Caco-2 (cell line): ENCODE measurements at regions of chr5 and their contacts with region 1.

Region 1: GRCh38 chr5:38672059-38672788 is 115.8 kb upstream of the LIFR start:
- DNase-seq: peak; percentile 73 to 74
- H3K4me3 ChIP-seq: no peak overlapping the region
- H3K4me3 Mint-ChIP-seq: no peak overlapping the region
- H3K27ac Mint-ChIP-seq: peak overlapping the region; percentile 76
- H3K4me1 ChIP-seq: peaks cover 60% of the 10 kb centered on the region
- H3K4me1 Mint-ChIP-seq: peaks cover 36% of the 10 kb centered on the region
- H3K27me3 ChIP-seq: no peaks in the 10 kb centered on the region
- H3K27me3 Mint-ChIP-seq: no peaks in the 10 kb centered on the region
- CTCF ChIP-seq: no peak

Region 2: DNA sequence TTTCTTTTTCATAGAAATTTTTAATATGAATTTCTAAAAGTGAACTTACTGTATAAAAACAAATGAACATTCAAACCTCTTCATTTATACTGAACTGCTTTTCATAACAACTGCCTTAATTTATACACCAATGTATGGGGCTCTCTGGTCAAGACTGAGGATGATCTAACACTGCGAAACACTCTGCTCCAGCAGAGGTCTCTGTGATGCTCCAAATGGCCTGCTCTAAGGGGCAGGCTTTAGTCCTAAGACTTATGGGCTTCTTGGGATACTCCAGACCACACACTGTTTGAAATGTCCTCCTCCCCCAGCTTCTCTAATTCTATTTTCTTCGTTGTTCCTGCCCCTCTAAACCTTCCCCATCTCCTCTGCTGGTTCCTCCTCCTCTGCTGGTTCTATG is 174.3 kb before region 1 on chr5:
- CTCF ChIA-PET with region 1: no interaction called
- POLR2A ChIA-PET with region 1: no interaction called
- intact Hi-C with region 1: loop called (anchors 1 kb)
- DNase-seq: peak in 1 of 2 experiments; percentile 35
- H3K4me3 ChIP-seq: no peak overlapping the region
- H3K4me3 Mint-ChIP-seq: no peak overlapping the region
- H3K27ac Mint-ChIP-seq: no peak overlapping the region
- H3K4me1 ChIP-seq: peaks cover 7% of the 10 kb centered on the region; the same call in 1 of the 2 replicates
- H3K4me1 Mint-ChIP-seq: peaks cover 6% of the 10 kb centered on the region
- H3K27me3 ChIP-seq: no peaks in the 10 kb centered on the region
- H3K27me3 Mint-ChIP-seq: no peaks in the 10 kb centered on the region
- CTCF ChIP-seq: peak; percentile 11 to 52

Region 3: GRCh38 chr5:38607396-38607795 is 64.8 kb before region 1 on chr5:
- CTCF ChIA-PET with region 1: no interaction called
- POLR2A ChIA-PET with region 1: no interaction called
- intact Hi-C with region 1: loop called (anchors 2 kb)
- DNase-seq: peak; percentile 58 to 76
- H3K4me3 ChIP-seq: no peak overlapping the region
- H3K4me3 Mint-ChIP-seq: peak overlapping the region; percentile 61
- H3K27ac Mint-ChIP-seq: peak overlapping the region; percentile 74
- H3K4me1 ChIP-seq: peaks cover 74% of the 10 kb centered on the region
- H3K4me1 Mint-ChIP-seq: peaks cover 43% of the 10 kb centered on the region
- H3K27me3 ChIP-seq: no peaks in the 10 kb centered on the region
- H3K27me3 Mint-ChIP-seq: no peaks in the 10 kb centered on the region
- CTCF ChIP-seq: no peak

Region 4: DNA sequence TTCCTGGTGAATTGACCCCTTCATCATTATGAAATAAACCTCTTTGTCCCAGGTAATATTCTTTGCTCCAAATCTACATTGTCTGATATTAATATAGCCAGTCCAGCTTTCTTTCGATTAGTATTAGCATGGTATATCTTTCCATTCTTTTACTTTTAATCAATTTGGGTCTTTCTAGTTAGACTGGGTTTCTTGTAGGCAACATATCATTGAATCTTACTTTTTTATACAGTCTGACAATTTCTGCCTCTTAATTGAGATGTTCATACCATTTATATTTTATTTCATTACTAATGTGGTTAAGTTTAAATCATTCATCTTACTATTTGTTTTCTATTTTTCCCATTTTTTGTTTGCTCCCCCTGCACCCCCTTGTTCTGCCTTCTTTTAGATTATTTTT is 54.1 kb before region 1 on chr5:
- CTCF ChIA-PET with region 1: no interaction called
- POLR2A ChIA-PET with region 1: no interaction called
- intact Hi-C with region 1: no loop called
- DNase-seq: no peak
- H3K4me3 ChIP-seq: no peak overlapping the region
- H3K4me3 Mint-ChIP-seq: no peak overlapping the region
- H3K27ac Mint-ChIP-seq: no peak overlapping the region
- H3K4me1 ChIP-seq: peaks cover 38% of the 10 kb centered on the region
- H3K4me1 Mint-ChIP-seq: peaks cover 40% of the 10 kb centered on the region
- H3K27me3 ChIP-seq: no peaks in the 10 kb centered on the region
- H3K27me3 Mint-ChIP-seq: no peaks in the 10 kb centered on the region
- CTCF ChIP-seq: no peak

Region 5: DNA sequence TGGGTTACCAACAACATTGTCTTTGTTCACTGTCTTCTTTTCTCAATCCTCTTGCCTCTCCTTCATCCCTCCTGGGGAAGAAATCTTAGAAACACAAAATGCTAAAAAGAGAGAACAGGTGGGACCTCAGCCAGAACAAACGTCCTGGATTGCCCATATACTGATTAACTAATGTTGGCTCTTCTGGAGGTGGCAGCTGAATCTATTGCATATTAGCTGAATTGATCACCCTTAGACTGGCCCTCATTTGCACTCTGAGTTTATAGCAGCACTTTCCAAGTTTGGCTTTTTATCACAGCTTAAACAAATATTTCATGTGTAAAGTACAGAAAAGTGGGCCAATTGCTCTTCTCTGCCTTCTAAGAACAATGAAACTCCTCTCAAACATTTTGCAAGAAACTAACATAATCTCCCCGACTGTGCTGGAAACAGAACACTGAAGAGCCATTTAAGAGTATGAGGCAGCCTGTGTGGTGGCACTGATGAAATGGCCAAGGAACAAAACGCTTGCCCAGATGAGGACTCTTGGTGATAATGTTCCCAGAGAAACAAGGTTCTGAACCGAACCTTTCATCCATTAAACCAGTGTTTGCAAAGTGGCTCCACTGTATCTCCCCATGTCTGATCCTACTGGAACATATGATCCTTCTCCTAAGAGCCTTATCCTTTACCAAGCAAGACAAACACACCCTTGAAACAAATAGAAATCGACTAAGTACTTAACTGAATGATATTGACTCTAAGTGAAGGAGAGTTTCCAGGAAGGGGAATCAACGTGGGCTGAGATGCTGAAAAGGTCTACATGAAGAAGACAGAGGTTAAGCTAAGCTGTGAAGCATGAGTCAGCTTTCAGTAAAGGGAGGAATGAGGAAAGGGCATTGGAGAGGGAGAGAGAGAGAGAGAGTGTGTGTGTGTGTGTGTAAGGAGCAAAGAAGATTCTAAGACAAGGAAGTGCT is 32.6 kb before region 1 on chr5:
- CTCF ChIA-PET with region 1: no interaction called
- POLR2A ChIA-PET with region 1: no interaction called
- intact Hi-C with region 1: loop called (anchors 5 kb)
- DNase-seq: peak in 1 of 2 experiments; percentile 24
- H3K4me3 ChIP-seq: no peak overlapping the region
- H3K4me3 Mint-ChIP-seq: peak overlapping the region; percentile 1
- H3K27ac Mint-ChIP-seq: peak overlapping the region; percentile 67
- H3K4me1 ChIP-seq: peaks cover 70% of the 10 kb centered on the region
- H3K4me1 Mint-ChIP-seq: peaks cover 46% of the 10 kb centered on the region
- H3K27me3 ChIP-seq: no peaks in the 10 kb centered on the region
- H3K27me3 Mint-ChIP-seq: no peaks in the 10 kb centered on the region
- CTCF ChIP-seq: no peak

Region 6: GRCh38 chr5:38692781-38693527 is 20.7 kb after region 1 on chr5:
- CTCF ChIA-PET with region 1: no interaction called
- POLR2A ChIA-PET with region 1: interaction called, 4 read pairs
- intact Hi-C with region 1: loop called (anchors 2 kb)
- DNase-seq: peak; percentile 27 to 49
- H3K4me3 ChIP-seq: no peak overlapping the region
- H3K4me3 Mint-ChIP-seq: peak overlapping the region; percentile 2
- H3K27ac Mint-ChIP-seq: peak overlapping the region; percentile 17
- H3K4me1 ChIP-seq: peaks cover 63% of the 10 kb centered on the region
- H3K4me1 Mint-ChIP-seq: peaks cover 42% of the 10 kb centered on the region
- H3K27me3 ChIP-seq: no peaks in the 10 kb centered on the region
- H3K27me3 Mint-ChIP-seq: no peaks in the 10 kb centered on the region
- CTCF ChIP-seq: no peak

Region 7: DNA sequence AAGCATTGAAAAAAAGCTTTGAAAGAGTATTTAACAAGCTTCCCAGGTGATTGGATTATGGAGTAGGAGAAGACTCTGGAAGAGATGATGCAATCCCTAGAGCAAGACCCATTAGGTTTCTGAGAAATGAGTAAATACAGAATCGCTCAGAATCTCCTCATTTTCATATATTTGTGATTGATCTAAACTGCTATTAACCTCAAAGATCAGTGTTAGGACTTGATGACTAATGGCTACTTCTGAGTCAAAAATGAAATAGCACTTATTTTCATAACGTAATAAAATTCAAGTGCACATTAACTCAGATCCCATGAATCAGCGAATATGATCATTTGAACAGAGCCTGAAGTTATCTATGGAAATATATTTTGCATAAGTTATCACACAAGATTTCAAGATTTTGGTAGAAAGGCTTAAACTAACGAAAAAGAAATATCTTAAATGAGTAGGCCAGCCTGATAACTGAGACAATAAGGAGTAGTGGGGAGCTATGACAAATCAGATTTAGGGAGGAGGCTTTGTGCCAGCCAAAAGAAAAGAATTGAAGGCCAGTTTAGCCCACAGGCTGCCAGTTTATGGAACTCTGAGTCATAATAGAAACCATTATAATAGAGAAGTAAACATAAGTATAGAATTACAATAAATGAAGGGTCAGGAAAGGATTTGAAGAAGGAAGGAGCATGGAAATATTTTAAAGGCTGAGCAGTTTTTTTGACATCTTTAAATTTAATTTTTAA is 67.0 kb after region 1 on chr5:
- CTCF ChIA-PET with region 1: no interaction called
- POLR2A ChIA-PET with region 1: no interaction called
- intact Hi-C with region 1: loop called (anchors 5 kb)
- DNase-seq: no peak
- H3K4me3 ChIP-seq: no peak overlapping the region
- H3K4me3 Mint-ChIP-seq: no peak overlapping the region
- H3K27ac Mint-ChIP-seq: no peak overlapping the region
- H3K4me1 ChIP-seq: no peaks in the 10 kb centered on the region
- H3K4me1 Mint-ChIP-seq: no peaks in the 10 kb centered on the region
- H3K27me3 ChIP-seq: no peaks in the 10 kb centered on the region
- H3K27me3 Mint-ChIP-seq: no peaks in the 10 kb centered on the region
- CTCF ChIP-seq: no peak

Region 8: DNA sequence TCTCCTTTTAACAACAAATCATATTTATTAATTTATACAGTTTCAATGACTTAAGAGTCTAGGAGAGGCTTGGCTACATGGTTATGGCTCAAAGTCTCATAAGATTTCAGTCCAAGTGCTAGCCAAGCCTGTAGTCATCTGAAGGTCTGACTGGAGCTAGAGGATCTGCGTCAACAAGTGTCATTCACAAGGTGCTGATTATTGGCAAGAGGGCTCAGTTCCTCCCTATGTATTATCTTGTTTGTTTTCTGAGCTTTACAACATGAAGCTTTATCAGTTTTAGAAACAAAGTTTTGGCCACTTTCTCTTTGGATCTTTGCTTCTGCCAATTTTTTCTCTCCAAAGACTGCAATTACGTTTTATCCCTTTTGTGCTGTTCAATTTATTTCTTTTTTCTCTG is 307.3 kb after region 1 on chr5:
- CTCF ChIA-PET with region 1: no interaction called
- POLR2A ChIA-PET with region 1: no interaction called
- intact Hi-C with region 1: no loop called
- DNase-seq: no peak
- H3K4me3 ChIP-seq: no peak overlapping the region
- H3K4me3 Mint-ChIP-seq: no peak overlapping the region
- H3K27ac Mint-ChIP-seq: no peak overlapping the region
- H3K4me1 ChIP-seq: no peaks in the 10 kb centered on the region
- H3K4me1 Mint-ChIP-seq: no peaks in the 10 kb centered on the region
- H3K27me3 ChIP-seq: no peaks in the 10 kb centered on the region
- H3K27me3 Mint-ChIP-seq: no peaks in the 10 kb centered on the region
- CTCF ChIP-seq: no peak